H1 (cell line): ENCODE measurements at regions of chr11 and their contacts with region 1.

Region 1: DNA sequence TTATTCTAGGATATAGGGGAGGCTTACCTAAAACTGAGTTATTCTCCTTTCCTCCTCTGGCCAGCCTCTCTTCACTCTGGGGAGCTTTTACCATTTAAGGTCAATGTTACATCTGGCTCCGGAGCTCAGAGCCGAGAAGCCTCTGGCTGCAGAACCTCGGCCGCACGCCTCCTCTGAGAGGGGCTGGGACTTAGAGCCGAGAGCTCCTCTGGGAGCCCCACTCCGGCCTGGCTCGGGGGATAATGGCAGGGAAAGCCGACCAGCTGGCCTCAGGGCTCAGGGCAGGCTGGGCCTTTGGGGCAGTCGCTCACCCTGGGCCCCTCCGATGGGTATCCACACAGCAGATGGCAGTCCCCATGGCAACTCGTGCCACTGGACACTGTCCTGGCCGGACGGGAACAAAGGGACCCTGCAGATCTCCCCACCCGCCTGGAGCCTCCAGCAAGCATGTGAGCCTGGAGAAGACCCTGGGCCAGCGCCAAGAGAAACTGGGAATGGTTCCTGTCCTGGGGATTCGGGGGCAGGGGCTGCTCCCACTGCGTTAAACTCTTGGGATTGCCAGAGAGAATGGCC is at the start of gene IRAG1:
- DNase-seq: no peak
- H3K4me3 ChIP-seq: no peak within 1 kb of the TSS
- H3K27ac ChIP-seq: no peak within 1 kb of the TSS
- H3K4me1 ChIP-seq: peaks cover 0 to 6% (median 0%) of the 10 kb centered on the region in 4 experiments; a peak in 1 of 7 replicates
- H3K27me3 ChIP-seq: no peaks in the 10 kb centered on the region
- CTCF ChIP-seq: no peak
- EP300 ChIP-seq: no peak
- POLR2A ChIP-seq: no peak
- RAD21 ChIP-seq: no peak
- total RNA-seq, gene IRAG1: 2.7 and 3.3 TPM in 2 replicates

Region 2: DNA sequence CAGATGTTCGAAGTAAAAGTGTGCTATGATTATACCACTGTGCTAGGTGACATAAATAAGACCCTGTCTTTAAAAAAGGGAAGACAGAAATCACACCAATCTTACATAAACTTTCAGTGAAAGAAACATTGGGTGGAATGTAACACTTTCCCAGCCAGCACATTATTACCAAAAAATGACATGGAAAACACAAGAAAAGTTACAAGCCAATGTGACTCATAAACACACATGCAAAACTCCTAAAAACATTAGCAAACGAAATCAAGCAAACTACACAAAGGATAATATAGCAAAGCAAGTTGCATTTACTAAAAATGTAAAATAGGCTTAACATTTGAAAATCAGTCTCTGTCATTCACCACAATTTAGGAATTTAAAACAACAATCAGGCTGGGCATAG is 446.6 kb before region 1 on chr11:
- CTCF ChIA-PET with region 1: no interaction called
- POLR2A ChIA-PET with region 1: no interaction called
- DNase-seq: no peak
- H3K4me3 ChIP-seq: no peak overlapping the region
- H3K27ac ChIP-seq: no peak overlapping the region
- H3K4me1 ChIP-seq: peaks cover 0 to 4% (median 0%) of the 10 kb centered on the region in 4 experiments; a peak in 3 of 7 replicates
- H3K27me3 ChIP-seq: no peaks in the 10 kb centered on the region
- CTCF ChIP-seq: no peak
- EP300 ChIP-seq: no peak
- POLR2A ChIP-seq: no peak
- RAD21 ChIP-seq: no peak

Region 3: DNA sequence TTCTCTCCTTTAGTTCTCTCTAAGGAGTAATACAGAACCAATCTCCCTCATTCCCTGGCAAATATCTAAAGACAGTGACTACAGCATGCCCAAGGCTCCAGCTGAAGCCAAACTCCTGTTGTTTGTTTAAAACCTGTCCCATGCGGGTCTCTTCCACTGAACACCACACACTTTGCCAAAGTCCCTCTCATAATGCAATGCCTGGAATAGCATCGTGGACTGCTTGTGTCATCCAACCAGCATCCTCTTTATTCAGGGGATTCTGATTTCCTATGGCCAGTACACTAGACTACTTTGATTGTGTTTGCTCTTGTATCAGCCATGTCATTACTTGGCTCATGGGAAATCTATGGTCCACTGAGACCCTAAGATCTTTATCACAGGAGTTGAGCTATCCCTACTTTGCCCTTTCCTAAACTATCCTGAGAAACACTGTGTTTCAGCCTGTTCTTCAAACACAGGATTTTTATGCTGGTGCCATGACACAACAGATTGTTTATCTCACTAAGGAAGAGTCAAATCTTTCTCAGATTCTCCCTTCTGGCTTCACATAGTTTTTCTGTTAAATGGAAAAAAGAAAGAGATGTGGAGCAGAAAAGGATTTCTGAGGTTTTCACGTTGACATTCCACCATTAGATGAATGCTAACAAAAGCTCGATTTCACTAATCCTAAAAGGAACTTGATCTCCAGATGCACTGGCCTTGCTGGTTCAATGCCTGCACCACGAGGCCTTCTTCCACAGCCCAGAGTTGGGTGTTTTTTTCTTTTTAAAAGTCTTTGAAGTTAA is 15.9 kb after region 1 on chr11:
- CTCF ChIA-PET with region 1: interaction called, 19 read pairs
- POLR2A ChIA-PET with region 1: no interaction called
- DNase-seq: no peak
- H3K4me3 ChIP-seq: no peak overlapping the region
- H3K27ac ChIP-seq: no peak overlapping the region
- H3K4me1 ChIP-seq: no peaks in the 10 kb centered on the region
- H3K27me3 ChIP-seq: no peaks in the 10 kb centered on the region
- CTCF ChIP-seq: no peak
- EP300 ChIP-seq: no peak
- POLR2A ChIP-seq: no peak
- RAD21 ChIP-seq: no peak